Panc1 (cell line): ENCODE measurements at regions of chr1 and their contacts with region 1.

Region 1: GRCh38 chr1:90671741-90672140 is 45.4 kb downstream of the BARHL2 start:
- DNase-seq: no peak
- ATAC-seq: no peak
- H3K4me3 ChIP-seq: no peak overlapping the region
- H3K27ac ChIP-seq: no peak overlapping the region
- H3K4me1 ChIP-seq: no peaks in the 10 kb centered on the region
- H3K27me3 ChIP-seq: no peaks in the 10 kb centered on the region
- CTCF ChIP-seq: no peak

Region 2: DNA sequence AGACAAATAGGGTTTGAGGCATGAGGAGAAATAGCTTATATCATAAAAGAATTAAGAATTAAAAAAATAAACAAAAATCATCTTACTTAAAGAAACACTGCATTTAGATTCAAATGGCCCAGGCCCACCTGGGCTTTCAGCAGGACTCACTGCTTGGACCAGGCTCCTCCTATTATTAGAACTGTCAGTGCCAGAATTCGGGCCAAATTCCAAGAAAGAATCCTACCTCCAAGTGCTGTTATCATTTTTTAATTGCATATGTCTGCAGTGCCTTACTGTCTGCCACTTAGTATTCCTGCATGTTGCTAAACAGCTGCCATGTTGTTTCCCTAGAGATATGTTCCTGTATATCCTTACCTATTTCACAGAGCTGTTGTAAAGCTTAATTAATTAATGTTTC is 66.7 kb before region 1 on chr1:
- CTCF ChIA-PET with region 1: no interaction called
- POLR2A ChIA-PET with region 1: no interaction called
- in situ Hi-C with region 1: no loop called
- intact Hi-C with region 1: loop called (anchors 10 kb)
- DNase-seq: no peak
- ATAC-seq: no peak
- H3K4me3 ChIP-seq: no peak overlapping the region
- H3K27ac ChIP-seq: no peak overlapping the region
- H3K4me1 ChIP-seq: no peaks in the 10 kb centered on the region
- H3K27me3 ChIP-seq: peaks cover 2% of the 10 kb centered on the region; the same call in 1 of the 2 replicates
- CTCF ChIP-seq: no peak

Region 3: GRCh38 chr1:90640325-90640724 is 31.4 kb before region 1 on chr1:
- CTCF ChIA-PET with region 1: no interaction called
- POLR2A ChIA-PET with region 1: no interaction called
- in situ Hi-C with region 1: no loop called
- intact Hi-C with region 1: no loop called
- DNase-seq: no peak
- ATAC-seq: no peak
- H3K4me3 ChIP-seq: no peak overlapping the region
- H3K27ac ChIP-seq: no peak overlapping the region
- H3K4me1 ChIP-seq: no peaks in the 10 kb centered on the region
- H3K27me3 ChIP-seq: no peaks in the 10 kb centered on the region
- CTCF ChIP-seq: no peak